Heart right ventricle (tissue), 16 donors: ENCODE measurements at regions of chr5 and their contacts with region 1.

Region 1: DNA sequence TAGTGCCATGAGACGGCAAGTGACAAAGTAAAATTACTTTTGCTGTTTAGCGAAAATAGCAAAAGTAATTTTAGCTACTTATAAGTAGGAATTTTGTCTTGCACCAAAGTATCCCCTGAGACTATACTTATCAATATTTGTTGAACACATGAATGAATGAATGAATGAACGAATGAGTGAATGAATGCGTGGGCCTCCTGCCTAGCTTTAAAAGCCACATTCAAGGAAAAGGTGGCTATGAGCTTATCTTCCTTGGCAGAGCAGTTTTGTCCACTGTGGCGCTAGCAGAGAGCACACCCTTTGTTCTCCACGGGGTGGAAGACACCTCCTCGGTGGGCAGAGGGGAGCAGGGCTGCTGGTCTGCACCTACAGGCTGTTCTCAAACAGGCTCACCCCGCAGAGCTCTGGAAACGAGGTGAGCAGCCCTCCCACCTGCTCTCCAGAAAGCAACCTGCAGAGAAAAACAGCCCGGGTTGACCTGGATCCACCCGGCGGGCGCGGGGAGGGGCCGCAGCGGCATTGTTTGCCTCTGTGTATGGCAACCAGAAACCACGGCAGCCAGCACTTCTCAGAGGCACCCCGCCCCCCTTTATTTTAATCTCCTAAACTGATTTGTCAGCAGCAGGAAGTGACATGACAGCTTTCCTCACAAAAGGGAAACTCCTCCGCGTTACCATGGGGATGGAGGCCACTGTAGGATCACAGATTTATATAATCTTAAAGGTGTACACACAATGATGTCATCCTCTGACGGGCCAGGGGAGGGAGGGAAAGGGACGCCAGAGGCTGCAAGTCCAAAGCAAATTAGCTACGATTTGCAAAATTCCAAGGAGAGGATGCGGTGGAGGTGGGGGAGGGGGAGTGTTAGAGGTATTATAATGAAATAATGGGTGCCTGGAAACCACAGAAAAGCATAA is 5.9 kb downstream of the DUSP1 start:
- DNase-seq: peak; percentile 90 to 100
- ATAC-seq: peak; percentile 64 to 82 (median 72)
- H3K4me3 ChIP-seq: peak overlapping the region in 9 of 10 donors; percentile 6 to 99 (median 93)
- H3K27ac ChIP-seq: peak overlapping the region; percentile 95 to 100 (median 100)
- H3K4me1 ChIP-seq: peaks cover 8 to 63% (median 37%) of the 10 kb centered on the region in 9 donors
- H3K27me3 ChIP-seq: no peaks in the 10 kb centered on the region
- CTCF ChIP-seq: no peak

Region 2: DNA sequence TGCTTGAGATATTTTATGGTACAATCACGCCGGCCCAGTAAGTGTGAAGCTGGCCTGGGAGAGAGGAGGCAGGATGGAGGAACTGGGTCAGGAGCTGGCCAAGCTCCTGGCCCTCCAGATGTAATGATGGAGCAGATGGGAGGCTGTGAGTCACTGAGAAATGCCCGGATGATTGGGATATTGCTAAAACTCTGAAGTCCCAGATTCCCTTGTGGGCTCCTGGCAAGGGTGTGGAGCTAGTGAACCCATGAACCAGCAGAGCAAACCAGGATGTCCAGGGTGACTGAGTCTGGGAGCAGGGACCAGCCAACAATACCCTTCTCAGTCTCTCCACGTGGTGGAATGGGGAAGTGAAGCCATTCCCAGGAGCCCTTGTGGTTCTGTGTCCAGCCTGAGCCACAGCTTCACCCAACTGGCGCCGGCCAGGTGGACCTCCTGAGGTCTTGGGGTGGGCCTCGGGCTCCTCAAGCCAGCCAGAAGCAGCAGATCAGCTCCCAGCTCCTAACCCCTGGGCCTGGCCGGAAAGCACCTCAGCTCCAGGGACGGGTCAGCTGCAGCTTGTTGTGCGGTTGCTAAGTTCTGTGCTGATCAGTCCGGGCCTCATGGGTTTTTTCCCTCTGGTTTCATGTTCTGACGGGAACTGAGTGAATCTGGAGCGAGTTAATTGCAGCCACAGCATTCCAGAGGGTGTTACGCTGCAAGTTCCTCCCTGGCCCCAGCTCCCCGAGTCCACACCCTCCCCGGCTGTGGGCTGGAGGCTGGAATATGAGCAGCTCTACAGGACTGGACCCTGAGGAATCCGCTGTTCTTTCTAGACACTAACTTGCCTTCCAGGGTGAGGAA is 31.8 kb before region 1 on chr5:
- intact Hi-C with region 1: loop called in 2 of 10 experiments (anchors 5 kb)
- DNase-seq: peak; percentile 79 to 90
- ATAC-seq: peak; percentile 86 to 96 (median 93)
- H3K4me3 ChIP-seq: peak overlapping the region in 4 of 10 donors; percentile 2 to 17 (median 6)
- H3K27ac ChIP-seq: peak overlapping the region; percentile 82 to 99 (median 94)
- H3K4me1 ChIP-seq: peaks cover 18 to 35% (median 27%) of the 10 kb centered on the region in 9 donors
- H3K27me3 ChIP-seq: no peaks in the 10 kb centered on the region
- CTCF ChIP-seq: peak in 1 of 9 donors; percentile 21

Region 3: DNA sequence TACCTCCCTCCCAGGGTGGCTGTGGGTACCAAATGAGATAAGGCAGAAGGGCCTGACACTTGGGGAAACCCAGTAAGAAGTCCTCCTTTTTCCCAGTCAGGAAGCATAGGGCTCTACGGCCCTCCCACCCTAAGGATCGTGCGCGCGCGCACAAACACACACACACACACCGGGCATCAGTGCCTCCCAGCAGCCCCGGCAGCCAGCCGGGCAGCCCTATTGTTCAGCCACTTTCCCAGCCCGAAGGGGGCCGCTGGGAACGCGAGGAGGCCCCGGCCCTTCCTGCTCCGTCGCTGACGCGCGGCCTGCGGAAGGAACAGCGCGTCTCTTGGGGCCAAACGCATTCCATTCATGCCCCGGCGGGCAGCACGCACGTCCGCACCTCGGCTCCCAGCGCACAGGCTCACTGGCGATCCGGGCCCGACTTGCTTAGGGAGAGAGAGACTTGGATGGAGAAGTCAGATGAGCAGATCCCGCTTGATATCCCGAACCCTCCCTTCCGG is 16.7 kb before region 1 on chr5:
- intact Hi-C with region 1: loop called in 4 of 10 experiments (anchors 1 to 2 kb)
- DNase-seq: peak; percentile 91
- ATAC-seq: peak; percentile 77 to 92 (median 89)
- H3K4me3 ChIP-seq: peak overlapping the region in 6 of 10 donors; percentile 3 to 33 (median 14)
- H3K27ac ChIP-seq: peak overlapping the region; percentile 83 to 99 (median 95)
- H3K4me1 ChIP-seq: peaks cover 31 to 69% (median 46%) of the 10 kb centered on the region in 9 donors
- H3K27me3 ChIP-seq: no peaks in the 10 kb centered on the region
- CTCF ChIP-seq: peak in 1 of 9 donors; percentile 28